Caco-2 (cell line): ENCODE measurements at regions of chr13 and their contacts with region 1.

Region 1: GRCh38 chr13:56561327-56561726 is 579.4 kb upstream of the PRR20A start:
- DNase-seq: peak in 1 of 2 experiments; percentile 10
- H3K4me3 ChIP-seq: no peak overlapping the region
- H3K4me3 Mint-ChIP-seq: no peak overlapping the region
- H3K27ac Mint-ChIP-seq: no peak overlapping the region
- H3K4me1 ChIP-seq: no peaks in the 10 kb centered on the region
- H3K4me1 Mint-ChIP-seq: no peaks in the 10 kb centered on the region
- H3K27me3 ChIP-seq: no peaks in the 10 kb centered on the region
- H3K27me3 Mint-ChIP-seq: no peaks in the 10 kb centered on the region
- CTCF ChIP-seq: peak in 1 of 2 experiments; percentile 11

Region 2: GRCh38 chr13:56510826-56511225 is 50.5 kb before region 1 on chr13:
- CTCF ChIA-PET with region 1: no interaction called
- POLR2A ChIA-PET with region 1: no interaction called
- intact Hi-C with region 1: no loop called
- DNase-seq: no peak
- H3K4me3 ChIP-seq: no peak overlapping the region
- H3K4me3 Mint-ChIP-seq: no peak overlapping the region
- H3K27ac Mint-ChIP-seq: no peak overlapping the region
- H3K4me1 ChIP-seq: no peaks in the 10 kb centered on the region
- H3K4me1 Mint-ChIP-seq: no peaks in the 10 kb centered on the region
- H3K27me3 ChIP-seq: no peaks in the 10 kb centered on the region
- H3K27me3 Mint-ChIP-seq: no peaks in the 10 kb centered on the region
- CTCF ChIP-seq: no peak

Region 3: DNA sequence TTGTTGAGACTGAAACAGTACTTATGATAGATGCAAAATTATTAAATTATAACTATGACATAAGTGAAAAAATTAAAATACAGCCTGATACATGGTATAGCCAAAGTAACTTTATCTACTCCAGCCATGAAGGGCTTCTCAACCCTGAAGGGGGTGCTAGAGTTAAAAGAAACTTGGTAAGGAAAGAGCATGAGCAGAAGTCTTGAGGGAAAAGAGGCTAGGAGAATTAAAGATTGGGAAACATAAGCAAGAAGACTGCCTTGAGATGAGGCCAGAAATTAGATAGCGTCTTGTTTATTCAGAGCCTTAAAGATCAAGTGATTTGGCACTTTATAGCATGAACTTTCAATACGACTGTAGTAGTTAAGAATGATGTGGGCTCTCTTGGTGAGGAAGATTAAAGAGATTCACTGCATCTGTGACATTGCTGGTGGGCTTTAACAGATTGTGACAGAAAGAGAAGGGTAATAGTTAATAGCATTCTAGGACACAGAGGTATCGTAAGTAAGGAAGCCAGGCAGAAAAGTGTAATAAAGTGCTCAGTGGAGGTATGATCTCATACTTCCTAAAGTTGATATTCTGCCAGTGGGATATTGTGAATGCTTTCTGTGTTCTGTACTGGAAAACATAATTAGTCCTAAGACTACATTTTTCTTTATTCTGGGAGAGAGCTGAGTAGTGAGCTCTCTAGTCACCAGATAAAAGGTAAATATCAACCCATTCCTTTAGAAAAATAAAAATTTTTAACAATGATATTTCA is 194.0 kb after region 1 on chr13:
- CTCF ChIA-PET with region 1: no interaction called
- POLR2A ChIA-PET with region 1: no interaction called
- intact Hi-C with region 1: loop called (anchors 10 kb)
- DNase-seq: peak in 1 of 2 experiments; percentile 15
- H3K4me3 ChIP-seq: no peak overlapping the region
- H3K4me3 Mint-ChIP-seq: no peak overlapping the region
- H3K27ac Mint-ChIP-seq: no peak overlapping the region
- H3K4me1 ChIP-seq: no peaks in the 10 kb centered on the region
- H3K4me1 Mint-ChIP-seq: no peaks in the 10 kb centered on the region
- H3K27me3 ChIP-seq: no peaks in the 10 kb centered on the region
- H3K27me3 Mint-ChIP-seq: no peaks in the 10 kb centered on the region
- CTCF ChIP-seq: peak in 1 of 2 experiments; percentile 16